Activated B cell treated with CpG ODN at 0.5 μM for 24 hours (primary cell): ENCODE measurements at regions of chr3 and their contacts with region 1.

Region 1: DNA sequence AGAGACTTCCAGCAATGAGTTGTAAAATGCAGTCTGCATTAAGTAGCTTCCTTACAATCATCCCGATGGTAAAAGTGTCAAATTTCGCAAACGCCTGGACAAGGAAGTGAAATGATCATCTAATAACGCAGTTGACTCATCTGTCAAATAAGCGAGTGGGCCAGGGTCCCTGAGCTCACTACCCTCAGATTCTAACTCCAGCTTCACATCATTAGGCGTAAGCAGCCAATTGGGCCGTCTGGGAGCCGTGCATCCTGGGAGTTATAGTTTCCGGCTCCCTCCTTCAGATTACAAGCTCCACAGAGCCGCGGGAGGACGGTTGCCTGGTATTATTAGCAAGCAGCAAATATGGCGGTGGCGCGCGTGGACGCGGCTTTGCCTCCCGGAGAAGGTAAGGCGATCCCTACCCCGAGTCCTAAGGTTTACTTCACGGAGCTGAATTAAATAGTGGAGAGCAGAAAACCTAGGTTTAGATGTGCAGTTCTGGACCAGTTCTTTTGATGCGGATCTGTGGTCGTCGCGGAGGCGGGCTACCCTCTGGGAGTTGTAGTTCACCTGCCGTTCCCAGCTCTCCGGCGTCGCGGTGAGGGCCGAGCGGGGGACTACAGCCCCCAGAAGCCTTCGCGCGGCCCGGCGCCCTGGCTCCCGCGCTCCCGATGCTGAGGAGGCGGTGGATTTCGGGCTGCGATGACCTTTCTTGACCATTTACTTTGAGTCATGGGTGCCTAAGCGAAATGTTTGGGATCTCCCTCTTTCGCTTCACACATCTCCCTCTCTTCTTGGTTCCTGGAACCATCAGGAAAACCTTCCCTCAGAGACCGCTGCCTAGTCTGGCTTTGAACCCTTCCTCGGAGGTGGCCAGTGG is at the start of gene CEP97:
- DNase-seq: peak; percentile 78
- ATAC-seq: peak; percentile 92
- H3K4me3 Mint-ChIP-seq: peak within 1 kb of the TSS; percentile 98
- H3K27ac Mint-ChIP-seq: peak within 1 kb of the TSS; percentile 97
- H3K4me1 Mint-ChIP-seq: peaks cover 40% of the 10 kb centered on the region
- H3K27me3 Mint-ChIP-seq: no peaks in the 10 kb centered on the region
- CTCF ChIP-seq: no peak
- total RNA-seq, gene CEP97: 7.3 and 7.9 TPM in 2 replicates

Region 2: GRCh38 chr3:101102678-101103296 is 621.8 kb before region 1 on chr3:
- CTCF ChIA-PET with region 1: no interaction called
- POLR2A ChIA-PET with region 1: no interaction called
- intact Hi-C with region 1: no loop called
- DNase-seq: no peak
- ATAC-seq: no peak
- H3K4me3 Mint-ChIP-seq: no peak overlapping the region
- H3K27ac Mint-ChIP-seq: no peak overlapping the region
- H3K4me1 Mint-ChIP-seq: no peaks in the 10 kb centered on the region
- H3K27me3 Mint-ChIP-seq: peaks cover 9% of the 10 kb centered on the region
- CTCF ChIP-seq: no peak

Region 3: DNA sequence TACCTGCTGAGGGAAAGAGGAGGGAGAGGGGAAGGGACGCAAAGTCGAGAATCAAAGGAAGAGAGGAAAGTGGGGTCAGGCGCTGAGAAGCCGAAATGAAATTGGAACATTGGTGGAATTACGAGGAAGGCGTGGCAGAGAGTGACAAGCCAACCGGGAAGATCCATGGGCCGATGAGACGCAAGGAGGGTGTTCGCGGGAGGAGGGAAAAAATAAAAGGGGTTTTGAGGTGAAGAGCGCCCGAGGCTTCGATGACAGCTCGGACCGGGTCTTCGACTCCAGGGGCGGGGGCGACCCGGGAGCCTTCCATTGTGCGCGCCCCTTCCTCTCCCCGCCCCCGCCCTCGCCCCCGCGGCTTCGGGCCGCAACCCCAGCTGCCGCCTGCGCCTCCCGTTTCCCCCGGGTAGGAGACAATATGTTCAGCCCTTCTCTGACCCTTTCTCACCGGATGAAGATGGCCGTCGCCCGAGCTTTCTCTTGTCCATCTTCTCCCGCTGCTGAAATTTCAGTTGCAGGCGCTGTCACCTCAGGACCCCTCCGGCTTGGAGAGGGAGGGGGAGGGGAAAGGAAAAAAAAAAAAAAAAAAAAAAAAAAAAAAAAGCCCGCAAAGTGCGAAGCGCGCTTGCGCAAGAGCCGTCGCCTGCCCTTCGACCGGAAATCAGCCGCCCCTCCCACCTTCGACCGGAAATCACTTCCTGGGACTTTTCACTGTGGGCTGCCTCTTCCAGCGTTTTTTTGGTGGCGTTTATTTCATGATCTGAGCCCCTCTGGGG is 211.7 kb before region 1 on chr3 and contains the start of gene SENP7:
- CTCF ChIA-PET with region 1: no interaction called
- POLR2A ChIA-PET with region 1: interaction called, 8 read pairs
- intact Hi-C with region 1: loop called (anchors 1 kb)
- DNase-seq: peak; percentile 74
- ATAC-seq: peak; percentile 72
- H3K4me3 Mint-ChIP-seq: peak within 1 kb of the TSS; percentile 98
- H3K27ac Mint-ChIP-seq: peak within 1 kb of the TSS; percentile 99
- H3K4me1 Mint-ChIP-seq: peaks cover 35% of the 10 kb centered on the region
- H3K27me3 Mint-ChIP-seq: no peaks in the 10 kb centered on the region
- CTCF ChIP-seq: no peak
- total RNA-seq, gene SENP7: 18.6 and 22.1 TPM in 2 replicates

Region 4: DNA sequence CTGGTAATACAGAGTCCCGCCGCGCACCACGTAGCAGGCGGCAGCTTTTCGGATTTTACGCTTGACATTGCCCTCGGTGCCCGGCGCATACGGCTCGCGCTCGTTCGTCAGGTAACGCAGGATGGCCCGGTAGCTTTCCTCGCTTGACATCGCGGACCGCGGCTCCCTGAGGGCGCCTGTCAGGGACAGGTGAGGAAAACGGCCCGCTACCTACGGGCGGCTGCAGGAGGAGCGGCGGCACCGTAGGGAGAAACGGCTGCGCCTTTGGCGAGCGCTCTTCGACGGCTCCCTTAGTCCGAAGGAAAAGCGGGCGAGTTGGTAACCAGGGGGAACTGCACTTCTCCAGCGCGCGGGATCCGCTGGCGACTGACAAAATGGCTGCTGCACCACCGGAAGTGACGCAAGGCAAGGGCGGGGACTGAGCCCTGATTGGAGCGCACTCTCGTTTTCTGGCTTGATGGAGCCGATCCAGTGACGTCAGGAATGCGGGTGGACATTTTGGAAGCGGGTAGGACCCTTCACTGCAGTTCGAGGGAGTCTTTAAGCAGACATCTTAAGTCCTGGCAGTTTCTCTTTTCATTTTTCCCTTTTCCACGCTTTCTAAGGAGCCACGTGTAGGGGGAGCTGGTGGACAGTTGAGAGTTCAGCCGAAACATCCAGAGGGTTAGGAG is 47.7 kb before region 1 on chr3 and contains the start of gene ZBTB11:
- CTCF ChIA-PET with region 1: interaction called, 3 read pairs
- POLR2A ChIA-PET with region 1: interaction called, 30 read pairs
- intact Hi-C with region 1: loop called (anchors 1 kb)
- DNase-seq: peak; percentile 99
- ATAC-seq: peak; percentile 68
- H3K4me3 Mint-ChIP-seq: peak within 1 kb of the TSS; percentile 93
- H3K27ac Mint-ChIP-seq: peak within 1 kb of the TSS; percentile 96
- H3K4me1 Mint-ChIP-seq: peaks cover 56% of the 10 kb centered on the region
- H3K27me3 Mint-ChIP-seq: no peaks in the 10 kb centered on the region
- CTCF ChIP-seq: no peak
- total RNA-seq, gene ZBTB11: 26.2 and 28.7 TPM in 2 replicates

Region 5: GRCh38 chr3:101695779-101696372 is 28.7 kb before region 1 on chr3:
- CTCF ChIA-PET with region 1: no interaction called
- POLR2A ChIA-PET with region 1: no interaction called
- intact Hi-C with region 1: loop called (anchors 1 kb)
- DNase-seq: no peak
- ATAC-seq: no peak
- H3K4me3 Mint-ChIP-seq: no peak overlapping the region
- H3K27ac Mint-ChIP-seq: no peak overlapping the region
- H3K4me1 Mint-ChIP-seq: peaks cover 3% of the 10 kb centered on the region
- H3K27me3 Mint-ChIP-seq: no peaks in the 10 kb centered on the region
- CTCF ChIP-seq: peak; percentile 67

Region 6: GRCh38 chr3:101791778-101792177 is 67.2 kb after region 1 on chr3:
- CTCF ChIA-PET with region 1: no interaction called
- POLR2A ChIA-PET with region 1: interaction called, 4 read pairs
- intact Hi-C with region 1: loop called (anchors 5 kb)
- DNase-seq: no peak
- ATAC-seq: peak; percentile 90
- H3K4me3 Mint-ChIP-seq: peak overlapping the region; percentile 50
- H3K27ac Mint-ChIP-seq: peak overlapping the region; percentile 37
- H3K4me1 Mint-ChIP-seq: peaks cover 31% of the 10 kb centered on the region
- H3K27me3 Mint-ChIP-seq: no peaks in the 10 kb centered on the region
- CTCF ChIP-seq: no peak

Region 7: GRCh38 chr3:102057781-102058421 is 333.3 kb after region 1 on chr3:
- CTCF ChIA-PET with region 1: no interaction called
- POLR2A ChIA-PET with region 1: no interaction called
- intact Hi-C with region 1: loop called (anchors 5 kb)
- DNase-seq: no peak
- ATAC-seq: peak; percentile 75
- H3K4me3 Mint-ChIP-seq: peak overlapping the region; percentile 42
- H3K27ac Mint-ChIP-seq: peak overlapping the region; percentile 97
- H3K4me1 Mint-ChIP-seq: peaks cover 61% of the 10 kb centered on the region
- H3K27me3 Mint-ChIP-seq: no peaks in the 10 kb centered on the region
- CTCF ChIP-seq: no peak